Activated T-helper 1 cell treated with anti-CD3 and anti-CD28 coated beads, Interleukin-12 subunit alpha, Interleukin-12 subunit beta, Interleukin-2, Interleukin-4 antibody, amounts not matched to agents 30 ng/mL and 10 ng/mL and 1 ng/mL, durations not matched to agents 14 hours and 24 hours and 36 hours (primary cell): ENCODE measurements at regions of chr4 and their contacts with region 1.

Region 1: DNA sequence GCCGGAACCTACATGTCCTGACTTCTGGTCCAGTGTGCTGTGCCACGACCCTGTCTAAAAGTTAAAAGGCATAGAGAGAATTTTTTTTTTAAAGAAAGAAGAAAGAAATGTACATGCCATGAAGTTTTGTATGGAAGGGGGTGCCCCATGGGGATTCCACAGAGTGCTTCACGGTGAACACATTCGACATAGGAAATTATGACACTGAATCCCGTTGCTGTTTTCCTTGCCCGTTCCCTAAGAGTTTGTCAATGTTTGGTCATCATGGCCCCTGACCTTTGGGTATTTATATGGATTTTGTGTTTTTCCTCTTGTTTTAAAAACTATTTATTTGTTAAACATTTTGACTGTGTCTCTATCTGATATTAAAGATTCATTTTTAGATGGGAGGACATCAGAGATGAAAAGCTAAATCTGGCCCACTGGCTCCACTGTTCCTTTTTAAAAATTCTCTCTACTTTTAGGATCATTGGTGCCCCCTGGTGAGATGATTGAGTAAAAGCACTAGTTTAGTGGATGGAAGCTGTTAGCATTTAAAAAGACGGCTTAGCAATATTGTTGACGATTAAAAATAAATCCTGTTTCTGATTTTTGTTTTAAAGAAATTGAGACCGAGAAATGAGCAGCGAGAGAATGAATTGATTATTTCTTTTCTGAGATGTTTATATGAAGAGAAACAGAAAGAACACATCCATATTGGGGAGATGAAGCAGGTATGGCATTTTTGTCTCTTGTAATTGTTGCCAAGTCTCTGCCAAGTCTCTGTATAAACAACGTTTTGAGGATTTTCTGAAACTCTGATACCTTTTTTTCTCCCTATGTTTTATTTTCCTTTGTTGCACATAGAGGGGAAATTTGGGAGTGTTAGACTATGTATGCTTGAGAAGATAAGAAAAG is 75.0 kb downstream of the PTTG2 start:
- DNase-seq: no peak
- H3K4me3 Mint-ChIP-seq: no peak overlapping the region
- H3K27ac Mint-ChIP-seq: no peak overlapping the region
- H3K4me1 Mint-ChIP-seq: no peaks in the 10 kb centered on the region
- H3K27me3 Mint-ChIP-seq: no peaks in the 10 kb centered on the region

Region 2: GRCh38 chr4:36692586-36692985 is 1342.6 kb before region 1 on chr4:
- intact Hi-C with region 1: no loop called
- DNase-seq: no peak
- H3K4me3 Mint-ChIP-seq: no peak overlapping the region
- H3K27ac Mint-ChIP-seq: no peak overlapping the region
- H3K4me1 Mint-ChIP-seq: no peaks in the 10 kb centered on the region
- H3K27me3 Mint-ChIP-seq: no peaks in the 10 kb centered on the region

Region 3: DNA sequence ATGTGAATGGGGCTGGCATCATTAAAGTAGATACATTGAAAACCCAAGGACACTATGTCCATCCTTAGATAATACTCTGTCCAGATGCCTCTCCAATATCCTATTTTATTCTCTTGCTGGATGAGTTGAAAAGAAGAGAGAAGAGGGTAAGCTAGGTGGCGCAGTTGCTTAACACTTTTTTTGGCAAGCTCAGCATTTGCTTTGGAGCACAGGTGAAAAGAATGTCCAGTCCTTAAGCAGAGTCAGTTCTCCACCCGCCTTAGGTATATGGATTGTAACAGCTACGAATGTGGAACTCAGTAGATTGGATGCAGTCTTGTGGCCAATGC is 582.3 kb before region 1 on chr4:
- intact Hi-C with region 1: loop called (anchors 1 kb)
- DNase-seq: peak; percentile 19
- H3K4me3 Mint-ChIP-seq: peak overlapping the region; percentile 72
- H3K27ac Mint-ChIP-seq: no peak overlapping the region
- H3K4me1 Mint-ChIP-seq: peaks cover 15% of the 10 kb centered on the region
- H3K27me3 Mint-ChIP-seq: peaks cover 50% of the 10 kb centered on the region

Region 4: GRCh38 chr4:37603070-37603468 is 432.2 kb before region 1 on chr4:
- intact Hi-C with region 1: loop called (anchors 5 kb)
- DNase-seq: peak; percentile 59
- H3K4me3 Mint-ChIP-seq: no peak overlapping the region
- H3K27ac Mint-ChIP-seq: no peak overlapping the region
- H3K4me1 Mint-ChIP-seq: peaks cover 33% of the 10 kb centered on the region
- H3K27me3 Mint-ChIP-seq: no peaks in the 10 kb centered on the region

Region 5: DNA sequence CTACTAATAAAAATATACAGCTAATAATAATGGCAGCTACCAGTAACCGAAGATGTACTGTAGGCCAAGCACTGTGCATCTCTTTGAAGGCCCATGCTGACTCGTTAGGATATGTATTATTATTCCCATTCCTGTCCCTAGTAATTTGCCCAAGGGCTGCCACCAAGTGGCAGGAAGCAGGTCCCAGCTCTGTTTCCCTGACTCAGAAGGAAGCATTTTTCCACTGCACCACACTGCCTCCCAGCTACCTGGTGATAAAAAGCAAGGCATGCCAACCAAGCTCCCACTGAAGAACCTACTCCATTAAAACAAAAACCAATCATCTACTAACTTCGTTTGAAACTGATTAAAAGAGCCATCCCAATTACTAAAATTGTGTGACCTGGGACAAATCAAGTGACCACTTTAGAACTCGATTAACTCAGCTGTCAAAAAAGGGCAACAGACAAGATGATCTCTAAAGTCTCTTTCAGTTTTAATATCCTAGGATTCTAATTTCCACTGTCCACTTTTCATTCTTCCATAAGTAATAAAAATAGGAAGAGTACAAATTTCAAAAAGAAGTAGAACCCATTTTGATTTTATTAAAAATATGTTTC is 233.1 kb before region 1 on chr4:
- intact Hi-C with region 1: loop called (anchors 1 kb)
- DNase-seq: no peak
- H3K4me3 Mint-ChIP-seq: no peak overlapping the region
- H3K27ac Mint-ChIP-seq: no peak overlapping the region
- H3K4me1 Mint-ChIP-seq: no peaks in the 10 kb centered on the region
- H3K27me3 Mint-ChIP-seq: peaks cover 6% of the 10 kb centered on the region

Region 6: DNA sequence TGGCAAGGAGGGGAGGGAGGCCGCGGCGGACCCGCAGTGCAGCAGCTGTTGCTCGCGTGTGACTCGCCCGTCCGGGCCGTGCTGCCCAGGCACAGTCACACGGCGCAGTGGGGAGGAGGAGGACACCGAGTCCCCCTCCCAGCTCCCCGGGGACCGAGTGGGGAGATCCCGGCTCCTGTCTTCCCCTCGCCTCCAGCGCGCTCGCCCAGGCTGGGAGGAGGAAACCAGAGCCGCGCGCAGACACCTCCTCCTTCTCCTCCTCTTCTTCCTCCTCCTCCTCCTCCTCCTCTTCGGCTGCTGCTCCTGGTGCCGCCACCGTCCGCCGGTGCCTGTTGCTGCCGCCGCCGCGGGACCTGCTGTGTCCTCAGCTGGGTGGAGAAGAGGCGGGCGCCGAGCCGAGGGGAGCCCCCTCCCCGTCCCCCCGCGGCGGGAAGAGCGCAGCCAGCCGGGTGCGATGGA is 144.4 kb before region 1 on chr4 and contains the start of gene TBC1D1:
- intact Hi-C with region 1: no loop called
- DNase-seq: no peak
- H3K4me3 Mint-ChIP-seq: peak within 1 kb of the TSS; percentile 93
- H3K27ac Mint-ChIP-seq: peak within 1 kb of the TSS; percentile 95
- H3K4me1 Mint-ChIP-seq: peaks cover 42% of the 10 kb centered on the region
- H3K27me3 Mint-ChIP-seq: peaks cover 19% of the 10 kb centered on the region
- total RNA-seq, gene TBC1D1: 50.2 and 52.6 TPM in 2 replicates

Region 7: GRCh38 chr4:37970487-37971101 is 64.6 kb before region 1 on chr4:
- intact Hi-C with region 1: loop called (anchors 1 kb)
- DNase-seq: no peak
- H3K4me3 Mint-ChIP-seq: no peak overlapping the region
- H3K27ac Mint-ChIP-seq: no peak overlapping the region
- H3K4me1 Mint-ChIP-seq: peaks cover 23% of the 10 kb centered on the region
- H3K27me3 Mint-ChIP-seq: no peaks in the 10 kb centered on the region

Region 8: DNA sequence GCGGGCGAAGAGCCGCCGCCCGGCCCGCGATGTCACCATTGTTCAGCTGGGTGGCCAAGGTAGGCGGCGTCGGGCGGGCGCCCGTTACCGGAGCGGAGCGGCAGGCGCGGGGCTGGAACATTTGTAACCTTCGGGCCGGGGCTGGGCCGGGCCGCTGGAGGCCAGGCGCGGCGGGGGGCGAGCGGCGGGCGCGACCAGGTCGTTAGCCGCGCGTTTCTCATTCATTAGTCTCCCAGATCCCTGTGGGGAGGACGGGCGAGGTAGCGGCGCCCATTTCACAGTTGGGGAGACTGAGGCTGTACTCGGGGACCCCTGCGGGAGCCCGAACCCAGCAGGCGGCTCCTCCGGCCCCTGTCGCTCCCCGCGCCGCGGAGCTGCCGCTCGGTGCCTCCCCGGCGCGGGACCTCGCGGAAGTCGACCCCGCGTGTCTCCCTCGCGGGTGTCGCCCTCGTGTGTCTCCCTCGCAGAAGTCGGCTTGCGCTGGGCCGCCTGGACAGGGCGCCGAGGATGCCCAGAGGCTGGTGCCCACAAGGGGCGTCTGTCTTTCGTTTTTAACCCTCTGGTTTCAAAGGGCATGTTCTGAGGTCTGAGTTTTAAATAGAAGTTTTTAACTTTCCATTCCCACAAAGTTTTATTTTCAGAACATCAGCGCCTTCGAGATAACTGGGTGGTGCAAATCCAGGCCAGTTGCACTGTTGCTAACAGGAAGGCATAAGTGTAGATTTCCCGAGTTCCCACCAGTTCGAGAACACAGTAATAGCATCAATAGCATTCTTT is 57.6 kb before region 1 on chr4:
- intact Hi-C with region 1: loop called (anchors 2 kb)
- DNase-seq: peak; percentile 70
- H3K4me3 Mint-ChIP-seq: peak overlapping the region; percentile 86
- H3K27ac Mint-ChIP-seq: peak overlapping the region; percentile 81
- H3K4me1 Mint-ChIP-seq: peaks cover 41% of the 10 kb centered on the region
- H3K27me3 Mint-ChIP-seq: no peaks in the 10 kb centered on the region